ENCODE measurements at regions of chr14 and their contacts with region 1.

Region 1: GRCh38 chr14:71932220-71932981 is at the start of gene RGS6:
- DNase-seq: no peak
- H3K4me3 ChIP-seq: no peak within 1 kb of the TSS
- CTCF ChIP-seq: no peak
- POLR2A ChIP-seq: no peak
- total RNA-seq, gene RGS6: 0.84 to 3.0 (median 1.7) TPM in 3 of 4 donors, not detected in the other

Region 2: GRCh38 chr14:72075649-72076334 is 143.4 kb after region 1 on chr14:
- intact Hi-C with region 1: no loop called
- DNase-seq: no peak
- H3K4me3 ChIP-seq: no peak overlapping the region
- CTCF ChIP-seq: no peak
- POLR2A ChIP-seq: no peak

Region 3: DNA sequence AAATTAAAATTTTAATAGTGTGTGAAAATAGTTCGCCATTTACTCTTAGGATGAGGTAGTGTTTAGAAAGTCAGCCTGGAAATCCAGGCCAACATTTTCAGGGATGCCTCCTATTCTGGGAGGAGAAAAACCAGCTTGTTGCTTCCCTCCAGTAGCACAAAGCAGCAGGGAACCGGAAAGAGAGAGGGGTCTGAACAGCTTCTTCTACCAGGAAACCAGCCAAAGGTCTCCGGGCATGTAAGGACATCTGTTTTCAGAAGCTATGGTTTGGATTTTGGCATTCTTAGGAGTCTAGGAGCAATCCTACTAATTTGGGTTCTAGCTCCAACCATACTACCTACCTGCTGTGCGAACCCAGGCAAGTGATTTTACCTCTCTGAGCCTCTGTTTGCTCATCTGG is 876.2 kb after region 1 on chr14:
- intact Hi-C with region 1: loop called (anchors 5 kb)
- DNase-seq: no peak
- H3K4me3 ChIP-seq: no peak overlapping the region
- CTCF ChIP-seq: no peak
- POLR2A ChIP-seq: no peak